Activated CD4-positive, alpha-beta T cell treated with anti-CD3 and anti-CD28 coated beads for 36 hours (primary cell): ENCODE measurements at regions of chr10 and their contacts with region 1.

Region 1: DNA sequence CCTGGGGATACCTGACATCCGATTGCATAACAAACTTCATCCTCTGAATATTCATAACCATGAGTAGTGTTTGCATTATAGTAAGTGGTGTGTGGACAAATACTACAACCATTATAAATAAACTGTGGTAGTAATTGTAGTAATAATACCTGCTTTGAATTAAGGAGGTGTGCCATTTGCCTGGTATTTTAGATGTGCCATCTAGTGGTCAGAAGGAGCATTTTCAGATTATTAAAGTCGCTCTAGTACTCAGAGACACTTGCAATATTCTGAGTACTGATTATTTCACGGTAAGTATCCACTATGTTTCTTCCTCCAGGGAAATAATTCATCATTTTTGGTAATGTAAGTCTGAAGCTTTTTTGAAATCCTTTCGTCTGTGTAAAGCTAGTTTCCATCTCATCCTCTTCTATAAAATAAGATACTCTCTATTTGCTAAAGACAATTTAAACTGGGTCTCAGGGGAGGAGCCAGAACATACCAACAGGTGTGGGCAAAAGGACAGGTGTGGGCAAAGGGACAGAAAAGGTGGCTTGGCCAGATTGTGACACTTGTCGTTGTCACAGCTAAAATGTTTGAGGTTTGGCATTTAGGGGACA is 115.3 kb upstream of the WDR11 start:
- DNase-seq: no peak
- ATAC-seq: no peak
- H3K4me3 Mint-ChIP-seq: no peak overlapping the region
- H3K27ac Mint-ChIP-seq: no peak overlapping the region
- H3K4me1 Mint-ChIP-seq: no peaks in the 10 kb centered on the region
- H3K27me3 Mint-ChIP-seq: peaks cover 4% of the 10 kb centered on the region

Region 2: DNA sequence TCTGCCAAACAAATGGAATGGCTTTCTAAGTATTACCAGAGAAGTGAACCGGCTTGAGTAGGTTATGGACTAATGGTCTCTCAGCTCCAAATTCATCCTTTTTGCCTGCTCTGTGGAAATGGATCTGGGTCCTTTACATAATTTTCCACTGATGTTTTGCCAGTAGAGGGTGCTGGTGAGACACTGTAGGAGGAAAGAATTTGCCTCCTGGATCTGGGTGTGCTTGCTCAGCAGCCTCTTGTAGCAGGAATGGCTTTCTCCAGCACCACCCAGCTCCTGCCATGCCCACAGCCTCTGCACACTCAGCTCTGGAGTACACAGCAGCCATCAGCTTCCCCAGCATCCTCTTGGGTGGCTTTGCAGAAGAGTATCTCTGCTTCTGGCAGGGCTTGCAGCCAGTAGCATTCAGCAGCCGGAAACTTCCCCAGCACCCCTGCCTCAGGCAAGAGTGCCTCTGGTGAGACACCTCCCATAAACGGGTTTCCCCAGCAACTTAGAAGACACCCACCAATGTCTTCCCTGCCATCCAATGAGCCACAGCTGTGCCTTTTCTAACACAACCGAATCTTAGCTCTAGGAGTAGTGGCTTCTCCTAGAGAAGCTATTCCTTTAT is 513.9 kb before region 1 on chr10:
- CTCF ChIA-PET with region 1: no interaction called
- POLR2A ChIA-PET with region 1: no interaction called
- intact Hi-C with region 1: loop called in 1 of 2 experiments (anchors 5 kb)
- DNase-seq: peak; percentile 31
- ATAC-seq: no peak
- H3K4me3 Mint-ChIP-seq: no peak overlapping the region
- H3K27ac Mint-ChIP-seq: no peak overlapping the region
- H3K4me1 Mint-ChIP-seq: no peaks in the 10 kb centered on the region
- H3K27me3 Mint-ChIP-seq: peaks cover 5% of the 10 kb centered on the region

Region 3: GRCh38 chr10:120423431-120424197 is 312.3 kb before region 1 on chr10:
- CTCF ChIA-PET with region 1: interaction called, 3 read pairs
- POLR2A ChIA-PET with region 1: no interaction called
- intact Hi-C with region 1: loop called (anchors 1 to 5 kb)
- DNase-seq: peak; percentile 57
- ATAC-seq: no peak
- H3K4me3 Mint-ChIP-seq: no peak overlapping the region
- H3K27ac Mint-ChIP-seq: no peak overlapping the region
- H3K4me1 Mint-ChIP-seq: no peaks in the 10 kb centered on the region
- H3K27me3 Mint-ChIP-seq: no peaks in the 10 kb centered on the region

Region 4: DNA sequence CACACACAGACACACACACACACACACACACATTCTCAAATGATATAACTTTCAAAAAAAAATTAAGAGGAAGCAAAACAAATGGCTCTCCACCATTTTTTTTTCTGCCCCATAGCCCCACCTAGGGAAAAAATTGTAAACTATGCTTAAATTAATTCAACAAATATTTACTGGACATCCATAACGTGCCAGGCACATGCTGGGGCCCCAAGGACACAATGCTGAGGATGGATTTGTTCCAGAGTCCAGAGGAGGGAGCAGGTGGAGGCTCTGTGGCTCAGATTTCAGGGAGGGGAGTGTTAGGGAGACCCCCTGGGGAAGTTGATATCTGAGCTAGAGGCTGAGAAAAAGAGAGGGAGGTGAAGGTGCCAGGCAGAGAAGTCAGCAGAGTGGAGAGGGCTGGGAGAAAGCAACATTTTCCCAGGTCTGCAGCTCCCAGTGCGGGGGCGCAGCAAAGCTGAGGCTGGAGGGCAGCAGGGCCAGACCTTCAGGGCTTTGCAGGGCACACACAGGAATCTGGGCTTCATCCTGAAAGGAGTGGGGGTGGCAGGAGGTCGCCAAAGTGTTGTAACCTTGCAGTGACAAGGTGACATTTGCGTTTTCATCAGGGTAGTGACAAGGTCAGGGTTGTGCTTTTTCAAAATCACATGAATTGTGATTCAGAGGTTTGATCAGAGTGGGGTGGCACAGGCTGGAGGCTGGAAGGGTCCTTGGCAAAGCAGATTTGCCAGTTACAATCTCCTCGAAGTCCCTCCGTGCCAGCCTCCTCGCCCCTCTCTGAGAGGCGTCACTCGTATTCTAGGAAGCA is 376.9 kb after region 1 on chr10:
- CTCF ChIA-PET with region 1: no interaction called
- POLR2A ChIA-PET with region 1: no interaction called
- intact Hi-C with region 1: no loop called
- DNase-seq: no peak
- ATAC-seq: no peak
- H3K4me3 Mint-ChIP-seq: no peak overlapping the region
- H3K27ac Mint-ChIP-seq: no peak overlapping the region
- H3K4me1 Mint-ChIP-seq: no peaks in the 10 kb centered on the region
- H3K27me3 Mint-ChIP-seq: peaks cover 5% of the 10 kb centered on the region